ENCODE measurements at regions of chr4 and their contacts with region 1.

Region 1: DNA sequence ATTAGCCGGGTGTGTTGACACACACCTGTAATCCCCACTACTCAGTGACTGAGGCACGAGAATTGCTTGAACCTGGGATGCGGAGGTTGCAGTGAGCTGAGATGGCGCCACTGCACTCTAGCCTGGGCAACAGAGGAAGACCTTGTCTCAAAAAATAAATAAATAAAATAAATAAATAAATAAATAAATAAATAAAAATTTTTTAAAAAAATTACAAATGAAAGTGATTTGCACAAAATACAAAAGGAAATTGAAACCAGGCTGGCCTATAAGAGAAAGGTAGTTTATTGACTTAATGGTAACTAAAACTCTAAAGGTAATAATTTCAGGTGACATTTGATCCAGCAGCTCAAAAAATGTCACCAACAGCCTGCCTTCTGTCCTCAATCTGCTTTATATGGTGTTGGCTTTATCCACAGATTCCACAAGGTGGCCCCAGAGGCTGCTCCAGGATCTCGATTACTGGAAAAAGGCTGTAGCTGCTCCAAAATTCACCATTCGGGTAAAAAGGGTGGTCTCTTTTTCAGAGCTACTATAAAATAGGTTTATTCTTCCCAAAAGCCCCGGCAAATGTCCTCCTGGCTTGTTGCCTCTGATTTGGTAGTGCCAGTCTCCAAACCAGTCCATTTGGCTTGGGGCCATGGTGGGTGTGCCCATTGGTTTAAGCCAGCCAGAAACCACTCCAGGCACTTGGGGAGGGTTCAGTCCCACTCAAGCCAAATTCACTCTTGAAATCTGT is 61.4 kb upstream of the TRIM2 start:
- DNase-seq: peak; percentile 68
- ATAC-seq: peak; percentile 89
- H3K4me3 ChIP-seq: no peak overlapping the region; a peak in 1 of 4 replicates
- H3K27ac ChIP-seq: peak overlapping the region; percentile 0; the same call in 1 of the 2 replicates
- H3K4me1 ChIP-seq: peaks cover 13 to 15% of the 10 kb centered on the region in 2 experiments
- H3K27me3 ChIP-seq: no peaks in the 10 kb centered on the region
- CTCF ChIP-seq: peak; percentile 81 to 94 (median 91)
- POLR2A ChIP-seq: no peak
- RAD21 ChIP-seq: peak; percentile 96

Region 2: DNA sequence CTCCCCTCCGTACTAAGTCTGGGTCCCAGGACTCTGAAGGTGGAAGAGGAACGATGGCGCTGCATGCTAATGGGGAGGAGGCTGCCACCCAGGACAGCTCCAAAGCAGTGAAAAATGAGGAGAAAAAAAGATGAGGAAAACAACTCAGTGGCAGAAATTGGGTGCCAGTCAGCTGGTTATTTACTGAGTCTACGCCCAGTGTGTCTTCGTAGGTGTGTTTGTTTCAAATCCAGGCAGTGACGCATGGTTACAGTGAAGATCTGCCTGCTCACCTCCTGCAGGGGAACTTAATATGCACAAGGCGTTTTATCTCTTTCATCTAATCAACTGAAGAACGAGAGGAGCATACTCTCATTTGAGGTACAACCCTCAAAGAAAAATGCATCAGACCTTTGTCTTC is 536.1 kb before region 1 on chr4:
- CTCF ChIA-PET with region 1: no interaction called
- POLR2A ChIA-PET with region 1: no interaction called
- RAD21 ChIA-PET with region 1: no interaction called
- intact Hi-C with region 1: no loop called
- DNase-seq: no peak
- ATAC-seq: no peak
- H3K4me3 ChIP-seq: no peak overlapping the region
- H3K27ac ChIP-seq: no peak overlapping the region
- H3K4me1 ChIP-seq: no peaks in the 10 kb centered on the region
- H3K27me3 ChIP-seq: peaks cover 6% of the 10 kb centered on the region; the same call in 1 of the 2 replicates
- CTCF ChIP-seq: no peak
- POLR2A ChIP-seq: no peak
- RAD21 ChIP-seq: no peak

Region 3: DNA sequence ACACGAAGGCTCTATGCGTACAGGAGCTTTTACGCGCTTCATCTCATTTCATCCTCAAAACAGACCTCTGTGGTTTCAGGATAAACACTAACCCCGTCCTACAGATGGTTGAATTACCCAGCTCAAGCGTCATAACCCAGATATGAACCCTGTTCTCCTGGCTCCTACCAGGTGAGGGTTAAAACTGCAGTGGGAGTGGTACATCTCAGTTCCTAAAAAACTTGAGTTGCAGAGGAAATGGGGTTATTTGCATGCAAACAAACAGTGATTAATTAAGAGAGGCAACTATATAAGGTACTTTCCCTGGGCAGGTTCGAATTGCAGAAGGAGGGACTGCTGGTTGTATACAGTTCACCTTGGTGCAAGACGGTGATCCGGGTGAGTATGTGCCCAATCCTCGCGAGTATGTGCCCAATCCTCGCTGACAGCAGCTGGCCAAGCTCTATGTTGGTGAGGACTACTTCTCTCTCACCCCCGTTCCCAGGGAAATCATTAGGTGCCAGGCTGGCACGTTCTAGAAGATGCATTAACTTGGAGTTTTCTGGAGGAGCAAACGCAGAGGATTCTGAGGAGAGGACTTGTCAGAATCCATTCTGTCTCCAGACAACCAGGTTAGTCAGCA is 134.2 kb before region 1 on chr4:
- CTCF ChIA-PET with region 1: no interaction called
- POLR2A ChIA-PET with region 1: no interaction called
- RAD21 ChIA-PET with region 1: no interaction called
- intact Hi-C with region 1: no loop called
- DNase-seq: no peak
- ATAC-seq: no peak
- H3K4me3 ChIP-seq: no peak overlapping the region
- H3K27ac ChIP-seq: no peak overlapping the region
- H3K4me1 ChIP-seq: no peaks in the 10 kb centered on the region
- H3K27me3 ChIP-seq: no peaks in the 10 kb centered on the region
- CTCF ChIP-seq: no peak
- POLR2A ChIP-seq: no peak
- RAD21 ChIP-seq: no peak

Region 4: GRCh38 chr4:153115322-153116290 is 27.3 kb before region 1 on chr4:
- CTCF ChIA-PET with region 1: no interaction called
- POLR2A ChIA-PET with region 1: no interaction called
- RAD21 ChIA-PET with region 1: no interaction called
- intact Hi-C with region 1: no loop called
- DNase-seq: peak; percentile 46
- ATAC-seq: peak; percentile 68
- H3K4me3 ChIP-seq: peak overlapping the region; percentile 6 to 49
- H3K27ac ChIP-seq: peak overlapping the region; percentile 39
- H3K4me1 ChIP-seq: peaks cover 10 to 26% of the 10 kb centered on the region in 2 experiments
- H3K27me3 ChIP-seq: no peaks in the 10 kb centered on the region
- CTCF ChIP-seq: no peak
- POLR2A ChIP-seq: no peak
- RAD21 ChIP-seq: no peak

Region 5: DNA sequence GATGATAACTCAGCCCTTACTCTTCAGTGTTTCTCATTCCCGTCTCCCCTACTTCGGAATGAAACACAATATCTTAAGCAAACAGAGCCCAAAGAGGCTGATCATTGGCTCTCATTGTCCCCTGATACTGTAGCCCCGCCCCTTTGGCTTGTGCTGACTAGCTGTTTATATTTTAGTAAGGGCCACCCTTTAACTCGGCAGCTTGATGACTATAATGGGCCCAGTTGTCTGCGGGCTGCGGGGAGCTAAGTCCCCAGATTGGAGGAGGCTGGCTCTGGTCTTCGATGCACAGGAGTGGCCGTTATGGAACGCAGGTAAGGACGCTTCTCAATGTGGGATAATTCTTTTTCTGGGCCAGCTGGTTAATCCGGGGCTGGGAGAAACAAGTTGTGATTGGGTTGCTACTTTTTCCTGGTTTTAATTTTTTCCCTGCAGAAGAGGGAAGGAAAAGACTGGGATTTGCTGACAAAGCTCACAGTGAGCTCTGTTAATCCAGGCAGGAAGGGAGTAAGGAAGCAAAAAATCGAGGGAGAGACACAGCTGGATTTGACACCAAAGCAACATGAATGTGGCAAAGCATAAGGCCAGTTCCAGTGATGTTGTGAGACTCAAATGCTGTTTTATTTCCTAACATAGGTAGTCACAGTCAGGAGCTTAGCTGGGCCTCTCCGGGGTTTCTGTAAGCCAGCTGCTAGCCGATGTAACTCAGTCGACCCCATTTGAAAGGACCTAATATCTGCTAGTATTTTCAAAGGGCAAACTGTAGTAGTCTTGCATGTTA is 61.6 kb after region 1 on chr4 and contains the start of gene TRIM2:
- CTCF ChIA-PET with region 1: interaction called, 15 read pairs
- POLR2A ChIA-PET with region 1: interaction called, 8 read pairs
- RAD21 ChIA-PET with region 1: no interaction called
- intact Hi-C with region 1: loop called (anchors 2 kb)
- DNase-seq: peak; percentile 86
- ATAC-seq: peak; percentile 73
- H3K4me3 ChIP-seq: peak within 1 kb of the TSS; percentile 64 to 69
- H3K27ac ChIP-seq: peak within 1 kb of the TSS; percentile 86
- H3K4me1 ChIP-seq: peaks cover 21 to 49% of the 10 kb centered on the region in 2 experiments
- H3K27me3 ChIP-seq: no peaks in the 10 kb centered on the region
- CTCF ChIP-seq: no peak
- POLR2A ChIP-seq: peak; percentile 82
- RAD21 ChIP-seq: no peak
- total RNA-seq, gene TRIM2: 41.4 TPM

Region 6: GRCh38 chr4:153296040-153296823 is 153.4 kb after region 1 on chr4:
- CTCF ChIA-PET with region 1: no interaction called
- POLR2A ChIA-PET with region 1: no interaction called
- RAD21 ChIA-PET with region 1: no interaction called
- intact Hi-C with region 1: no loop called
- DNase-seq: no peak
- ATAC-seq: no peak
- H3K4me3 ChIP-seq: no peak overlapping the region
- H3K27ac ChIP-seq: no peak overlapping the region
- H3K4me1 ChIP-seq: no peaks in the 10 kb centered on the region
- H3K27me3 ChIP-seq: no peaks in the 10 kb centered on the region
- CTCF ChIP-seq: no peak
- POLR2A ChIP-seq: no peak
- RAD21 ChIP-seq: no peak

Region 7: GRCh38 chr4:153344131-153345010 is 201.5 kb after region 1 on chr4 and contains the start of gene MND1:
- CTCF ChIA-PET with region 1: interaction called, 13 read pairs
- POLR2A ChIA-PET with region 1: no interaction called
- RAD21 ChIA-PET with region 1: interaction called in 1 of 2 experiments, 5 read pairs
- intact Hi-C with region 1: no loop called
- DNase-seq: peak; percentile 68
- ATAC-seq: peak; percentile 89
- H3K4me3 ChIP-seq: peak within 1 kb of the TSS; percentile 67 to 78
- H3K27ac ChIP-seq: peak within 1 kb of the TSS; percentile 79
- H3K4me1 ChIP-seq: peaks cover 18 to 37% of the 10 kb centered on the region in 2 experiments
- H3K27me3 ChIP-seq: no peaks in the 10 kb centered on the region
- CTCF ChIP-seq: peak; percentile 66 to 84 (median 81)
- POLR2A ChIP-seq: peak; percentile 1
- RAD21 ChIP-seq: peak; percentile 86
- total RNA-seq, gene MND1: 29.9 TPM

Region 8: DNA sequence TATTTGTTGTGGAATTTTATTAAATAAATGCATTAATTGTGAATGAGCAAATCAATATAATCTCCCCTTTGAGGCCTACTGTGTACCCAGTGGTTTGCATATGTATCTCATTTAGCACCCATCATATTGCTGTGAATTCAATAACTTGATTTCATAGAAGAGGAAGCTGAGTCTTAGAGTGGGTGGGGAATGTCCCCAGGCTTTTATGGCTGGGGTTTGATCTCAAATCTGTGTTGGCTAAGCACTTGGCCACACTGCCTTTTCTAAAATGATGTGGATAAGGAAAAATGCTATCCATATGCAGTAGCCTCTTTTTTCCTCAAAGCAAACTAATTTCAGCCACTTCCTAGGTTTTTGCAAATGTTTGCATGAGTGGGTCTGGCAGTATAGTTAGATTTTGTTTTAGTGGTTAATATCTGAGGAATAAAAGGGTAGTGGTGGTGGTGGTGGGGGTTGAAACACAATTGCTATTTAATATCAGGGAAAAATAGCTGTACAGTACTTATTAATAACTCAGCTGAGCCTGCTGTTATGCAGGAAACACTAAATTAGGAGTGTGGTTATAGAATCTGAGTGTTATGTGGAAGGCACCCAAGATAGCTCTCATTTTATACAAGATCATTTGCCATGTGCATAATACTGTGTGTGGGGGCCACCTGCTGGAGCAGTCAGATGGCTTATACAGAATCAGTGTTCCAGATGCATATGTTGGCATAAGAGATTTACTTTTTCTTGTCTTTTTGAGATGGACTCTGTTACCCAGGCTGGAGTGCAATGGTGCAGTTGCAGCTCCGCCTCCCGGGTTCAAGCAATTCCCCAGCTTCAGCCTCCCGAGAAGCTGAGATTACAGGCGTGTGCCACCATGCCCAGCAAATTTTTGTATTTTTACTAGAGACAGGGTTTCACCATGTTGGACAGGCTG is 431.3 kb after region 1 on chr4:
- CTCF ChIA-PET with region 1: interaction called, 7 read pairs
- POLR2A ChIA-PET with region 1: no interaction called
- RAD21 ChIA-PET with region 1: interaction called in 1 of 2 experiments, 3 read pairs
- intact Hi-C with region 1: loop called (anchors 1 kb)
- DNase-seq: peak; percentile 37
- ATAC-seq: peak; percentile 87
- H3K4me3 ChIP-seq: no peak overlapping the region
- H3K27ac ChIP-seq: peak overlapping the region; percentile 11; the same call in 1 of the 2 replicates
- H3K4me1 ChIP-seq: peaks cover 10 to 12% of the 10 kb centered on the region in 2 experiments; a peak in 3 of 4 replicates
- H3K27me3 ChIP-seq: no peaks in the 10 kb centered on the region
- CTCF ChIP-seq: peak; percentile 50 to 88 (median 61)
- POLR2A ChIP-seq: no peak
- RAD21 ChIP-seq: peak; percentile 97

Region 9: GRCh38 chr4:153750197-153750817 is 607.4 kb after region 1 on chr4:
- CTCF ChIA-PET with region 1: interaction called, 3 read pairs
- POLR2A ChIA-PET with region 1: no interaction called
- RAD21 ChIA-PET with region 1: no interaction called
- intact Hi-C with region 1: loop called (anchors 2 kb)
- DNase-seq: peak; percentile 54
- ATAC-seq: peak; percentile 97
- H3K4me3 ChIP-seq: no peak overlapping the region
- H3K27ac ChIP-seq: no peak overlapping the region
- H3K4me1 ChIP-seq: peaks cover 0 to 7% of the 10 kb centered on the region in 2 experiments; a peak in 1 of 4 replicates
- H3K27me3 ChIP-seq: no peaks in the 10 kb centered on the region
- CTCF ChIP-seq: peak; percentile 77 to 84 (median 77)
- POLR2A ChIP-seq: no peak
- RAD21 ChIP-seq: peak; percentile 89